Esophagus muscularis mucosa (tissue), 4 donors: ENCODE measurements at regions of chr5 and their contacts with region 1.

Region 1: GRCh38 chr5:53430261-53431252 is 49.9 kb upstream of the FST start:
- DNase-seq: no peak
- H3K4me3 ChIP-seq: no peak overlapping the region
- H3K27ac ChIP-seq: no peak overlapping the region
- H3K4me1 ChIP-seq: peaks cover 0 to 7% (median 0%) of the 10 kb centered on the region in 4 donors
- H3K27me3 ChIP-seq: no peaks in the 10 kb centered on the region
- CTCF ChIP-seq: peak in 2 of 3 experiments; percentile 37 to 44
- EP300 ChIP-seq: no peak
- POLR2A ChIP-seq: no peak

Region 2: GRCh38 chr5:53170748-53171349 is 259.7 kb before region 1 on chr5:
- intact Hi-C with region 1: loop called (anchors 10 kb)
- DNase-seq: no peak
- H3K4me3 ChIP-seq: no peak overlapping the region
- H3K27ac ChIP-seq: no peak overlapping the region
- H3K4me1 ChIP-seq: peaks cover 4 to 31% (median 28%) of the 10 kb centered on the region in 4 donors
- H3K27me3 ChIP-seq: no peaks in the 10 kb centered on the region
- CTCF ChIP-seq: peak; percentile 54 to 66 (median 59)
- EP300 ChIP-seq: no peak
- POLR2A ChIP-seq: no peak

Region 3: DNA sequence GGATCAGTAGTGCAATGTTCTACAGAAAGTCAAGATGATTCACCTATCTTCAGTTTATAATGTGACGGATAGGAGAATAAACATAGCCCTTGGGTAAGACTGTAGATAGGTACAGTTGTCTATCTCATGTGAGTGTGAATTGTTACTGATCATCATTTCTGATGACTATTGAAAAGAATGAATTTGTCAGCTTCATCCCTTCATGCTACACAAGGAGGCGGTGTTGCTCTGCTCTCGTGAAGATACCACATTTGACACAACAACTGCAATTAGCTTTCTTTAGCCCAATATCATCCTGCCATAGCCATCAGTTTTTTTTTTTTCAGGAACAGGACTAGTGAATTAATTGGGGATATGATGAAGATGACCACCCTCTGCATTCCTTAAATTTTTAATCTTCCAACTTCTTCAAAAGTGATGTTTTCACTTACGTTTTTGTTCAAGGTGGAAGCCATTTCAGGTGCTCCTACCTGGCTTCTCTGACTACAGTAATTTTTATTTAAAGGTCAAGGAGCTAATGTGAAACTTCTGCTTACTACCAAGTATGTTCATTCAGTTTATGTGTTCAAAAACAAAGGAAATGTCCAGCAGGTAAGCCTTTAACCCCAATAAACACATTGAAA is 168.1 kb before region 1 on chr5:
- intact Hi-C with region 1: loop called (anchors 5 kb)
- DNase-seq: no peak
- H3K4me3 ChIP-seq: no peak overlapping the region
- H3K27ac ChIP-seq: no peak overlapping the region
- H3K4me1 ChIP-seq: peaks cover 0 to 10% (median 5%) of the 10 kb centered on the region in 4 donors
- H3K27me3 ChIP-seq: no peaks in the 10 kb centered on the region
- CTCF ChIP-seq: peak in 2 of 3 experiments; percentile 14 to 38
- EP300 ChIP-seq: no peak
- POLR2A ChIP-seq: no peak

Region 4: DNA sequence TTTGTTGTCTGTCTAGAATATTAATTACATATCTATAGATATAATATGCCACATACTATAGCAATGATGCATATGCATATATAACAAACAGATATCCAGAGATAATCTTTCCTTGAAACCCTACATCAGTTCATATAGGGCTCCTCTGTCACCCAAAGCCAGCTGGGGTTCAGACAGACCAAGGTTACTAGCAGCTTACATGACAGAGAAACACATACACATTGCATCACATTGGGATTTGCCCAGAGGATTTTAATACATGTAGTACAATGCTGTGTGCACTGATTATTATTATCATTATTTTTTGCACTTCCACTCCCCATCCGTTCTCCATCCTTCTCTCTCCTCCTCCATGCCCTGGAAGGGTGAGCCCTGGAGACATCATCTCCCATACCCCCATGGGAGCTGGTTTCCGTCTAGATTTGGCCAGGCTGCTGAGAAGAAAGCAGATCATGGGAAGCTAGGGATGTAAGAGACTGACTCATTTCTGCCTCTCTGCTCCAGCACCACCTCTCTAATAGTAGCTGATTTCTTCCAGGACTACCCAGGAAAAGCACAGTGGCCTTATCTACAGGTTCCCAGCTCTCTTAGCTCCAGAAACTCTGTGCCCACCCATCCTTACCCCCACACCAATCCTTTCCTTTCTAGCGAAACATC is 73.1 kb after region 1 on chr5:
- intact Hi-C with region 1: no loop called
- DNase-seq: no peak
- H3K4me3 ChIP-seq: no peak overlapping the region
- H3K27ac ChIP-seq: no peak overlapping the region
- H3K4me1 ChIP-seq: no peaks in the 10 kb centered on the region
- H3K27me3 ChIP-seq: peaks cover 0 to 15% (median 0%) of the 10 kb centered on the region in 4 donors
- CTCF ChIP-seq: no peak
- EP300 ChIP-seq: no peak
- POLR2A ChIP-seq: no peak